Mammary epithelial cell (primary cell): ENCODE measurements at regions of chr17 and their contacts with region 1.

Region 1: GRCh38 chr17:31926100-31926729 is 10.6 kb upstream of the SUZ12 start:
- DNase-seq: no peak
- H3K4me3 ChIP-seq: no peak overlapping the region
- H3K27ac ChIP-seq: no peak overlapping the region
- H3K4me1 ChIP-seq: no peaks in the 10 kb centered on the region
- H3K27me3 ChIP-seq: no peaks in the 10 kb centered on the region
- CTCF ChIP-seq: no peak

Region 2: GRCh38 chr17:31558748-31559644 is 367.2 kb before region 1 on chr17:
- CTCF ChIA-PET with region 1: no interaction called
- dilution Hi-C with region 1: no loop called
- in situ Hi-C with region 1: no loop called
- intact Hi-C with region 1: no loop called
- DNase-seq: peak; percentile 70
- H3K4me3 ChIP-seq: peak overlapping the region; percentile 39 to 53 (median 51)
- H3K27ac ChIP-seq: peak overlapping the region; percentile 17
- H3K4me1 ChIP-seq: peaks cover 8% of the 10 kb centered on the region
- H3K27me3 ChIP-seq: no peaks in the 10 kb centered on the region
- CTCF ChIP-seq: peak; percentile 36 to 67

Region 3: DNA sequence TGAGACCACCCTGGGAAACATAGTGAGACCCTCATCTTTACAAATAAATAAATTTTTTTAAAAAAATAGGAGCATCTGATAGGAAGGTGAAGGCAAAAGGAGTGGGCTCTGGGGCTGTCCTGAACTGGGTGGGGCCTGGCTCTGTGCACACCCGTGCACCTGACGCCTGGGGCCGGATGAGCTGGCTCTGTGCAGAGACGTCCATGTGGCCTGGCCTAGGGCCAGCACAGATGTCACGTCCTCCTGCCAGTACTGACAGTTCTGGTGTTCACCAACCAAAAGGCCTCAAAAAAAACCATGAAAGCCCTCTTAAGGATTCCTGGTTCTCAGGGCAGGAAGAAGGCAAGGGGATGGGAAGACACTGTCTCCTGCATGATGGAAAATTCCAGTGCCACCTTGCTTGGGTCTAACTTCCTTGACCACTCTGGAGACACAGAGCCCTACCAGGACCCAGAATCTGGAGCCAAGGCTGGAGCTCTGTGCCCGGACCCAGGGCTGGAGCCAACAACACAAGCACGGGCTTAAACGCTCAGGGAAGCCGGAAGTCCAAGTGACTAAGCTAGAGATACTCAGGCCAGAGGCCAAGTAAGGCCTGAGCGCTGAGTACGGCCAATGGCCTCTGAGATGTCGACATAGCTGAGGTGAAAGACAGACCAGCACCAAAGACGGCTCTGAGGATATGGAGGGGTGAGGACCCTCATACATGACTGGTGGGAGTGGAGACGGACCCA is 100.1 kb before region 1 on chr17:
- CTCF ChIA-PET with region 1: no interaction called
- dilution Hi-C with region 1: no loop called
- in situ Hi-C with region 1: no loop called
- intact Hi-C with region 1: no loop called
- DNase-seq: peak; percentile 66
- H3K4me3 ChIP-seq: no peak overlapping the region
- H3K27ac ChIP-seq: no peak overlapping the region
- H3K4me1 ChIP-seq: peaks cover 7% of the 10 kb centered on the region
- H3K27me3 ChIP-seq: no peaks in the 10 kb centered on the region
- CTCF ChIP-seq: no peak

Region 4: DNA sequence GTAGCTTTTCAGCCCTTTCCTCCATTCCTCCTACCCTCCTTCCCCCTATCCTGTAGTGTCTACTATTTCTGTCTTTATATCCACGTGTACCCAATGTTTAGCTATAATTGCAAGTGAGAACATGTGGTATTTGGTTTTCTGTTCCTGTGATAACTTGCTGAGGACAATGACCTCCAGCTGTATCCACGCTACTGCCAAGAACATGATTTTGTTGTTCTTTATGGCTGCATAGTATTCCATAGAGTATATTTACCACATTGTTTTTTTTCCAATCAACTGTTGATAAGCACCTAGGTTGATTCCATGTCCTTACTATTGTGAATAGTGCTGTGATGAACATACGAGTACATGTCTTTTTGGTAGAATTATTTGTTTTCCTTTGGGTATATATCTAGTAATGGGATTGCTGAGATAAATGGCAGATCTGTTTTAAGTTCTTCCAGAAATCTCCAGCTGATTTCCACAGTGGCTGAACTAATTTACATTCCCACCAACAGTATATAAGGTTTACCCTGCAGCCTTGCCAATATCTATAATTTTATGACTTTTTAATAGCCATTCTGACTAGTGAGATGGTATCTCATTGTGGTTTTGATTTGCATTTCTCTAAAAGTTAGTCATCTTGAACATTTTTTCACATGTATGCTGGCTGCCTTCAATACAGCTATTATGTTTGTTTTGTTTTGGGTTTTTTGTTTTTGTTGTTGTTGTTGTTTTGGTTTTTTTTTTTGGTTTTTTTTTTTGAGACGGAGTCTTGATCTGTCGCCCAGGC is 56.2 kb before region 1 on chr17:
- CTCF ChIA-PET with region 1: no interaction called
- dilution Hi-C with region 1: loop called (anchors 5 kb)
- in situ Hi-C with region 1: no loop called
- intact Hi-C with region 1: no loop called
- DNase-seq: no peak
- H3K4me3 ChIP-seq: no peak overlapping the region
- H3K27ac ChIP-seq: no peak overlapping the region
- H3K4me1 ChIP-seq: no peaks in the 10 kb centered on the region
- H3K27me3 ChIP-seq: no peaks in the 10 kb centered on the region
- CTCF ChIP-seq: no peak